Calu3 (cell line): ENCODE measurements at regions of chr12 and their contacts with region 1.

Region 1: DNA sequence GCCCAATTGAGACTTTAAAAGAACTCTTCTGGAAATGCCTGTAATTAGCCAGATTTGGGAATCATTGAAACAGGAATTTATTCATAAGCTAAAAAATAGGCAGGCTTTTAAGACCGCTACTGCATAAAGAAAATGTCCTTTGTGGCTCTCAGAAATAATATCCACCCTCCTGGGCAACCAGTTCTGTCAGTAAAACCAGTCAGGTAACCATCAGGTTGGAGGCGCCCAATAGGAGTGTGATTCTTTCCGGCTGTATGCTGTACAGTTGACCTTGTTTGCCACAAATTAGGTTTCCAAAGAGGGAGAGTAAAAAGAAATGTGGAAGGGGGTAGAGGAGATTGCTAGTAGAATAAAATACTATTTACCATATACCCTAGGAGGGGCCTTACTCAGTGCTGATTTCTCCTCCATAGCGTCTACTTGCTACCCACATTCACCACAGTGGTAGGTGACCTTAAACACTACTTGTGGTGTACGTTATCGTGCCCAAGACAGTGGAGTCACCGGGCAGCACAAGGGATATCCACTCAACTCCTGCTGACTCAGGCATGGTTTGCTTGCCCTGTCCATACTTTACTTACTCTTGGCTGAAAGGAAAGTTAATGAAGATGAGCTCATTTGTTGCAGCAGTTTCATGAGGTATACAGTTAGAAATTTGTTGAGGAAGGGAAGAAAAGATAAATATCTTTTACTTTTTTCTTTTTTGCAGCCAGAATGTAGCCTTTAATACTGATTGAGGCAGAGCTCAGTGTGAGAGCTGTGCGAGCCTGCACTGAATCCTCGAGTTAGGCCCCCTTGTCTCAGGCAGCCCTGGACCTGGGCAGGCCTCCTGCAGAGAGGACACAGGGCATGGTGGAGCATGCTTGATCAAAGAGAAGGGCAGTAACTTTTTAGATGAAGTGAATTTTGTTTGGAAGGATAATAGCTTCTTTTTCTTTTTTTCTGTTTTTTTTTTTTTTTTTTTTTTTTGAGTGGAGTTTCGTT is 76.7 kb downstream of the DIP2B start:
- DNase-seq: peak; percentile 64
- H3K4me3 Mint-ChIP-seq: peak overlapping the region; percentile 46
- H3K27ac Mint-ChIP-seq: peak overlapping the region; percentile 55
- H3K4me1 Mint-ChIP-seq: peaks cover 22% of the 10 kb centered on the region
- H3K27me3 Mint-ChIP-seq: no peaks in the 10 kb centered on the region
- CTCF ChIP-seq: no peak

Region 2: DNA sequence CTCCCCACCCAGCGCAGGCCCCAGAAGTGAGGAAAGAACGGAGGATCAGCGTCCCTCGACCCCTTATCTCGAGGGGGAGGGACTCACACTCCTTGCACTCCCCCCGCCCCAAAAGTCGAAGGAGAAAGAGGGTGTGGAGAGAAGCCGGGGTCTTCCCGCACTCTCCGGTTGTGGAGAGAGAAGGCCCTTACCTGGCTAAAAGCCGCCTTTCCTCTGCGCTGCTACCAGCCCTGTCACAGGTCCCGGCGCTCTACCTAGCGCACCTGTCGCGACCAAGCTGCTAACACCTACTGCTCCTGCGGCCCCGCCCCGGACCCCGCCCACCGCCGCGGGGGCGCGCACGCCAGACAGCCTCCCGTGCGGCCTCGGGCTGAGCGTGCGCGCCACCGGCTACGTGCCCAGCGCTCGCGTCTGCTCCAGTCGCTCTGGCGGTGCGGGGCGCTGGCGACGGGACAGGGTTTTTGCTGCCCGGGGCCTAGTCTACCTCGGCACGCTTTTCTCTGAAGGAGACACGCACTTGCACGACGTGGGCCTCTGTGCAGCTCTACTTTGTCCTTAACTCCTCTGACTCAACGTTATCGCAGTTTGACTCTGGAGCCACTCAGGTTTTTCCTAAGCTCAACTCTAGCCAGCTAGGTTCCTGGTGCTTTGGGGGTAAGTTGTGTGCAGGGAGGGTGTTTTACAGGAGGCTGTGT is 298.1 kb before region 1 on chr12 and contains the start of gene LIMA1:
- CTCF ChIA-PET with region 1: interaction called, 10 read pairs
- intact Hi-C with region 1: no loop called
- DNase-seq: peak; percentile 94
- H3K4me3 Mint-ChIP-seq: peak within 1 kb of the TSS; percentile 97
- H3K27ac Mint-ChIP-seq: peak within 1 kb of the TSS; percentile 75
- H3K4me1 Mint-ChIP-seq: peaks cover 22% of the 10 kb centered on the region
- H3K27me3 Mint-ChIP-seq: no peaks in the 10 kb centered on the region
- CTCF ChIP-seq: no peak
- total RNA-seq, gene LIMA1: 48.9 and 67.6 TPM in 2 replicates

Region 3: DNA sequence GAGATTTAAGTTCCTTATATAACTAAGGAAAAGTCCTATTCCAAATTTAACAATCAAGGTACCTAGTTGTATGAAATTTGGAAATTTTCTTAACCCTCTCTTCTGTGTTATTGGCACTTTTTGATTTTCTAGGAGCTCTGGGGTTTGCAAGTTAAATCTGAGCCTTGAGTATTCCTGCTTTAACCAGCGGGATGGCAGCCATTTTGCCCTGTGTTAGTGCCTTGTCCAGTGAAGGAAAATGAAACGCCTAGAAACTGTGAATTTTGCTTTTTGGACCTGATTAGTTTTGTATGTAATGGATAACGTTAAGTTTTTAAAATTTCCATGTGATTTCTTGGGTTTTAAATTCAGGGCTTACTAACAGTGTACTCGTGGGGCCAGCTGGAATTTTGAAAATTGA is 31.6 kb before region 1 on chr12:
- CTCF ChIA-PET with region 1: no interaction called
- intact Hi-C with region 1: loop called (anchors 1 kb)
- DNase-seq: no peak
- H3K4me3 Mint-ChIP-seq: no peak overlapping the region
- H3K27ac Mint-ChIP-seq: peak overlapping the region; percentile 62
- H3K4me1 Mint-ChIP-seq: peaks cover 29% of the 10 kb centered on the region
- H3K27me3 Mint-ChIP-seq: no peaks in the 10 kb centered on the region
- CTCF ChIP-seq: no peak